Activated CD4-positive, alpha-beta T cell treated with anti-CD3 and anti-CD28 coated beads, Interleukin-2, amount 10 ng/mL, durations not matched to agents 24 days and 14 days (primary cell): ENCODE measurements at regions of chr1 and their contacts with region 1.

Region 1: GRCh38 chr1:16009030-16009709 is 5.1 kb downstream of the SRARP start:
- DNase-seq: peak; percentile 93
- H3K4me3 Mint-ChIP-seq: no peak overlapping the region
- H3K27ac Mint-ChIP-seq: no peak overlapping the region
- H3K4me1 Mint-ChIP-seq: peaks cover 25% of the 10 kb centered on the region
- H3K27me3 Mint-ChIP-seq: no peaks in the 10 kb centered on the region

Region 2: DNA sequence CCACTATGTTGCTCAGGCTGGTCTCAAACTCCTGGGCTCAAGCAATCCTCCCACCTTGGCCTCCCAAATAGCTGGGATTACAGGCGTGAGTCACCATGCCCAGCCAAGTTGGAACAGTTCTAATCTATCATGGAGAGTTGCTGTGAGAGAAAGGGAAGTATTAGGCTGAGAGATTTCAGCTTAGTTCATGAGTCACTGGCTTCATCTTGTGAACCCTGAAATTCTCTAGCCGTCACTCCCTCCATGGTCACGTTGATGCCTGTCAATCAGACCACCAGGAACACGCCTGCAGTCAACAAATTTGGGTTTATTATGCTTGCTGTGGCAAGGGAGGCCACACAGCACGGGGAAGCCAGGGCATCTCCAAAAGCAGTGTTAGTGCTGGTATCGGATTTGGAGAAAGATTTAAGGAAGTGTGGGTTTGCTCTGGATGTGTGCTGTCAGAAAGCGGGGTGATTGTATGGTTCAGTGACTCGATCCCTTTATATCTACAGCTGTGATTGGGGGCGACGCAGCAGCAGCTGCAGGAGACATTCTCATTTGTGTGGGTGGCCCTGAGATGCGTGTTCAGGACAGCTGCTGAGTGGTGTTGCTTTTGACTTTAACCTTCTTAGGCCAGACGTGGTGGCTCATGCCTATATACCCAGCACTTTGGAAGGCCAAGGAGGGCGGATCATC is 220.4 kb before region 1 on chr1:
- intact Hi-C with region 1: loop called (anchors 1 kb)
- DNase-seq: no peak
- H3K4me3 Mint-ChIP-seq: no peak overlapping the region
- H3K27ac Mint-ChIP-seq: no peak overlapping the region
- H3K4me1 Mint-ChIP-seq: peaks cover 2% of the 10 kb centered on the region
- H3K27me3 Mint-ChIP-seq: peaks cover 5% of the 10 kb centered on the region

Region 3: DNA sequence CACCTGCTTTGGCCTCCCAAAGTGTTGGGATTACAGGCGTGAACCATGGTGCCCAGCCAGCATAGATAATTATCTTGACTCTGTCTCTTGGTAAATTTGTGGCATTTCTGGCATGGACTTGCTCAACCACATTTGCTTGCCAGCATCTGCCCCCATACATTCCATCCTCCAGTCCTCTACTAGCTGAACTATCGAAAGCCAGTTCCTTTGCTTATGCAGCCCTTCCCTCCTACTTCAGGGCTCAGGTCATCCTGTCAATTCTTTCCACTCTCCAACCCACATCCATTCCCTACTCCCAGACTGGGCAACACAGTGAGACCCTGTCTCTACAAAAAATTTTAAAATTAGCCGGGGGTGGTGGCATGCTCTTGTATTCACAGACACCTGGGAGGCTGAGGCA is 188.7 kb before region 1 on chr1:
- intact Hi-C with region 1: loop called (anchors 1 kb)
- DNase-seq: no peak
- H3K4me3 Mint-ChIP-seq: no peak overlapping the region
- H3K27ac Mint-ChIP-seq: no peak overlapping the region
- H3K4me1 Mint-ChIP-seq: peaks cover 9% of the 10 kb centered on the region
- H3K27me3 Mint-ChIP-seq: no peaks in the 10 kb centered on the region

Region 4: GRCh38 chr1:16026723-16027484 is 17.7 kb after region 1 on chr1:
- intact Hi-C with region 1: no loop called
- DNase-seq: peak; percentile 66
- H3K4me3 Mint-ChIP-seq: no peak overlapping the region
- H3K27ac Mint-ChIP-seq: no peak overlapping the region
- H3K4me1 Mint-ChIP-seq: no peaks in the 10 kb centered on the region
- H3K27me3 Mint-ChIP-seq: peaks cover 11% of the 10 kb centered on the region

Region 5: GRCh38 chr1:16055613-16056520 is 46.7 kb after region 1 on chr1:
- intact Hi-C with region 1: loop called (anchors 1 kb)
- DNase-seq: peak; percentile 96
- H3K4me3 Mint-ChIP-seq: no peak overlapping the region
- H3K27ac Mint-ChIP-seq: no peak overlapping the region
- H3K4me1 Mint-ChIP-seq: peaks cover 6% of the 10 kb centered on the region
- H3K27me3 Mint-ChIP-seq: peaks cover 7% of the 10 kb centered on the region